HEK293 (cell line): ENCODE measurements at regions of chr11 and their contacts with region 1.

Region 1: GRCh38 chr11:6489306-6489705 is 7.8 kb upstream of the DNHD1 start:
- H3K4me3 ChIP-seq: no peak overlapping the region
- H3K27ac ChIP-seq: no peak overlapping the region
- H3K4me1 ChIP-seq: no peaks in the 10 kb centered on the region
- CTCF ChIP-seq: no peak

Region 2: GRCh38 chr11:6448574-6448973 is 40.7 kb before region 1 on chr11:
- CTCF ChIA-PET with region 1: no interaction called
- POLR2A ChIA-PET with region 1: no interaction called
- H3K4me3 ChIP-seq: no peak overlapping the region
- H3K27ac ChIP-seq: no peak overlapping the region
- H3K4me1 ChIP-seq: no peaks in the 10 kb centered on the region
- CTCF ChIP-seq: no peak

Region 3: DNA sequence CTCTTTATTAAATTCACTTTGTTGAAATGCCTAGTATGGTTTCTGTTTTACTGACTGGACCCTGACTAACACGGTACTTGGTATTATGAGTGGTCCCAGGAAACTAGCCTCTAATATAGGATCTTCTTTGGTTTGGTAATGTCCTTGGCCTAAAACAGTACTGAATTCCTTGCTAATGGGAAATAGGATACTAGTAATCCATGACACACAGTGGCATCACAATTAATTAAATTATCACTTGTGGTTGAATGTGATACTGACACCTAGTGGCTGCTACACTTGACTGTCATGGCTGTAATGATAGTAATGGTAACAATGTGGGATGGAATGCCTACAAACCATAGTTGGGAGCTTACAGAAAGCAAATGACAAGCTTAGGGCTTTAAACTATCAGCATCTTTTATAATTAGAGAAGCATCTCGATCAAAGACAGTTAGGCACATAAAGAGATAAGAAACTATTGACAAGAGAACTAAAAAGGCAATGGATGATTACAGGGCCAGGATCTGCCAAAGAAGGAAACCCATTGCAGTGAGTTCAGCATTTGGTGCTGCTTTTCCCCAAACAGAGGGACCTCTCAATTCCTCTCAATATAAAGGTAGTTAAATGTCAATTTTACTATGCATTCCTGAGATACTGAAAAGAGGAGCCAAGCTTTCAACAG is 16.4 kb after region 1 on chr11:
- CTCF ChIA-PET with region 1: interaction called, 18 read pairs
- POLR2A ChIA-PET with region 1: no interaction called
- H3K4me3 ChIP-seq: no peak overlapping the region
- H3K27ac ChIP-seq: no peak overlapping the region
- H3K4me1 ChIP-seq: no peaks in the 10 kb centered on the region
- CTCF ChIP-seq: no peak